ENCODE measurements at regions of chr13 and their contacts with region 1.

Region 1: GRCh38 chr13:30132623-30133553 is 174.5 kb downstream of the KATNAL1 start:
- DNase-seq: peak; percentile 89
- H3K4me3 ChIP-seq: no peak overlapping the region
- H3K27ac ChIP-seq: no peak overlapping the region
- H3K4me1 ChIP-seq: peaks cover 4% of the 10 kb centered on the region
- H3K27me3 ChIP-seq: no peaks in the 10 kb centered on the region
- CTCF ChIP-seq: peak; percentile 79 to 92
- POLR2A ChIP-seq: no peak

Region 2: DNA sequence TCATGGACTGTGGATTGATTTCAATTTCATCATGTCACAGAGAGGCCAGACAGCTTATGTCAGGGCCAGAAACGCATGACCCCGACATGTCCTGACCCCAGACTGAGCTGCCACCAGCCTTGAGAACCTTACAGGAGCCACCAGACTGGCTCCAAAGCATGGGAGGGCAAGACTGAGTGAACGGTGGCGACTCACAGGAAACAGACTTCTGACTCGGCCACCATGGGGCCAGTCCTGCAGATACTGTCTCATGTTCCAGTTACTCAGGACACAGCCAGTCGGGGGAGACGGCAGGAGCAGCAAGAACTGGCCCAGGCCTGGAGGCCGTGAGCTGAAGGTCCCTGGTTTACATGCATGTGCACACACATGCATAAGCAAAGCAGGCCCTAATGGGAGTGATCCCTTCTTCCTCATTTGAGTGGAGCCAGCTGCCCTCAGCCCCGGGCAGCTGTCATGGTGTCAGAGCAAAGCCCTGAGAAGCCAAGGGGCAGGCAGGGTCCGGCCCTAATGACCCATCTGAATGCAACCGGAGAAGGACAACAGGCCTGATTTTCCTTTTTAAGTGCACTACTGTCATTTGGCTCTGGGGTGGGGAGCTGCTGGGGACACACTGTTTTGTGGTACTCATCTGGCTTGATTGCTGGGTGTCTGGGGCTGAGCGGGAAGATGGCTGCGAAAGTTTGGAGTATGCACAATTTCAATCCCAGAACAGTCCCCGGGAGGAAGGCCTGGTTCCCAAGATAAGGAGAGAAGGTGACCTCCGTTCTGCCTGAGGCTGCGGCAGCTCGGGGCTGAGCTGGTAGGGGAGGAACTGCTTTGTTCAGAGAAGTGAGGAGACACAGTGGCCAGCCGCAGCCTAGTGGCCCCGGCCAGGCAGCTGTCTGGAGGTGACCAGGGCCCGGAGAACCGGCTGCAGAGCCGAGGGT is 619.2 kb before region 1 on chr13:
- CTCF ChIA-PET with region 1: no interaction called
- POLR2A ChIA-PET with region 1: no interaction called
- dilution Hi-C with region 1: no loop called
- intact Hi-C with region 1: no loop called
- DNase-seq: peak; percentile 25
- H3K4me3 ChIP-seq: no peak overlapping the region
- H3K27ac ChIP-seq: no peak overlapping the region
- H3K4me1 ChIP-seq: peaks cover 16% of the 10 kb centered on the region
- H3K27me3 ChIP-seq: no peaks in the 10 kb centered on the region
- CTCF ChIP-seq: no peak
- POLR2A ChIP-seq: no peak

Region 3: DNA sequence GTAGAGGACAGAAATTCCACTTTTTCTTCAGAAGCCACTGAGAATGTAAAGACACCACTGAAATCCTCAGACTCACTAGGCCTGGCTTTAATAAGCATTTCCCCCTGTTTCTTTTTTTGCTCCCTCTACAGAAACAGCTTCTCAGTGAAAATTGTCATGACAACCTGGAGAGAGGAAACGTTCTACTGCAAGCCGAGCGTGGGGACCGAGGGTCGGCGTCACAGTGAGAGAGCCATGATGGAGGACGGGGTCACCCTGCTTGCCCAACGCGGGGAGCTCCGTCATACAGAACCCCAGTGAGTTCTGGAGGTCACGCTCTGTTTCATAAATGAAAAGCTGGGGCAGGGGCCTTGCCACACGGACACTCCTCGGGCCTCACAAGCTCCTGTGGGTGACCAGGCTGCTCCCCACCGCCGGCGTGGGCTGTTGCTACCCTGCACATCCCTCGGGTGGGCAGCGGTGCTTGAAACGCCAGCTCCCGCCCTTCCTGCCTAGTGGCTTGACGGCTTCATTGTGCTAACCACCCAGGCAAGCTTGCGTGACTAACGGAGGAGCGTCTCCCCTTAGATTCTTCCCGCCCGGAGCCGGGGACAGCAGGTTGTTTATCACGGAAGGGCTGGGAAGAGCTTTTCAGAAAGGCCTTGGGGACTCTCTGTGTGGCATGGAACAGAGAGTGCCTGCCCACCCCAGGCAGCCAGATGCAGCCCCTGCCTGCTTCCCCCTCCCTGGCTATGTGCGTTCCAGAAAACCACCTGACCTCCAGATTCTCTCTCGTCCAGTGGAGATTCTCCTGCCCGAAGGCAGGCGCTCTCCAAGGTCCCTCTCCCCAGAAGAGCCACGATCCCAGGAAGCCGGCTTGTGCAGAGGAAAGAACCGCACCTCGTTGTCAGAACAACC is 20.9 kb after region 1 on chr13:
- CTCF ChIA-PET with region 1: interaction called, 60 read pairs
- POLR2A ChIA-PET with region 1: no interaction called
- dilution Hi-C with region 1: no loop called
- intact Hi-C with region 1: loop called (anchors 1 kb)
- DNase-seq: no peak
- H3K4me3 ChIP-seq: no peak overlapping the region
- H3K27ac ChIP-seq: no peak overlapping the region
- H3K4me1 ChIP-seq: no peaks in the 10 kb centered on the region
- H3K27me3 ChIP-seq: peaks cover 0 to 3% of the 10 kb centered on the region in 2 experiments
- CTCF ChIP-seq: no peak
- POLR2A ChIP-seq: no peak

Region 4: GRCh38 chr13:30334663-30335386 is 201.9 kb after region 1 on chr13:
- CTCF ChIA-PET with region 1: interaction called, 24 read pairs
- POLR2A ChIA-PET with region 1: no interaction called
- dilution Hi-C with region 1: loop called (anchors 25 kb)
- intact Hi-C with region 1: loop called (anchors 1 kb)
- DNase-seq: peak; percentile 37
- H3K4me3 ChIP-seq: no peak overlapping the region
- H3K27ac ChIP-seq: no peak overlapping the region
- H3K4me1 ChIP-seq: no peaks in the 10 kb centered on the region
- H3K27me3 ChIP-seq: peaks cover 0 to 2% of the 10 kb centered on the region in 2 experiments
- CTCF ChIP-seq: peak; percentile 48 to 50
- POLR2A ChIP-seq: no peak

Region 5: GRCh38 chr13:30429721-30430694 is 297.1 kb after region 1 on chr13:
- CTCF ChIA-PET with region 1: interaction called, 11 read pairs
- POLR2A ChIA-PET with region 1: no interaction called
- dilution Hi-C with region 1: no loop called
- intact Hi-C with region 1: no loop called
- DNase-seq: peak; percentile 81
- H3K4me3 ChIP-seq: no peak overlapping the region
- H3K27ac ChIP-seq: peak overlapping the region; percentile 42
- H3K4me1 ChIP-seq: peaks cover 13% of the 10 kb centered on the region
- H3K27me3 ChIP-seq: no peaks in the 10 kb centered on the region
- CTCF ChIP-seq: no peak
- POLR2A ChIP-seq: no peak

Region 6: DNA sequence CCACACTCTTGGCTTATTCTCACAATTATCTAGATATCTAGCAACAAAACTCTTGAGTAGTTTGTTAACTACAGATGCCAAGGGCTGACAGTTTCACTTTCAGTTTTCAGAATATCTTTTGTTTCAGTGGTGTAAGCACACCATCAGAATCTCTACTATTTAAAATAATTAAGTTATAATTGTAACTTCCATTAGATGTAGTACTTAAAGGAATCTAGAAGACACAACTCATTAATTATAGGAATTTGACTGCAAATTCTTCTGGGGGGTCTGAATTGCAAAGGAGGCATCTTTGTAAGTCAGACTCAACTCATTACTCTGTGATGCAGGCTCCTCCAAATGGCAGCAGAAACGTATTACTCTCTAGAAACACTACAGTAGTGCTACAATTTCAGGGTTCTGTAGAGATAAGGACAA is 440.0 kb after region 1 on chr13:
- CTCF ChIA-PET with region 1: interaction called, 7 read pairs
- POLR2A ChIA-PET with region 1: no interaction called
- dilution Hi-C with region 1: no loop called
- intact Hi-C with region 1: loop called (anchors 1 kb)
- DNase-seq: peak; percentile 77
- H3K4me3 ChIP-seq: peak overlapping the region; percentile 0 to 88 (median 73)
- H3K27ac ChIP-seq: peak overlapping the region; percentile 44
- H3K4me1 ChIP-seq: peaks cover 9% of the 10 kb centered on the region
- H3K27me3 ChIP-seq: no peaks in the 10 kb centered on the region
- CTCF ChIP-seq: peak in 1 of 2 donors; percentile 12
- POLR2A ChIP-seq: no peak

Region 7: GRCh38 chr13:30802953-30803478 is 670.1 kb after region 1 on chr13:
- CTCF ChIA-PET with region 1: interaction called, 20 read pairs
- POLR2A ChIA-PET with region 1: no interaction called
- dilution Hi-C with region 1: no loop called
- intact Hi-C with region 1: loop called (anchors 2 kb)
- DNase-seq: peak; percentile 74
- H3K4me3 ChIP-seq: peak overlapping the region in 1 of 3 experiments; percentile 23
- H3K27ac ChIP-seq: no peak overlapping the region
- H3K4me1 ChIP-seq: peaks cover 28% of the 10 kb centered on the region
- H3K27me3 ChIP-seq: no peaks in the 10 kb centered on the region
- CTCF ChIP-seq: peak; percentile 93 to 94
- POLR2A ChIP-seq: no peak

Measured in endothelial cell of umbilical vein (primary cell).